Dendritic cell treated with granulocyte-macrophage colony-stimulating factor and Interleukin-4, amounts not matched to agents 40 ng/mL and 50 ng/mL, for 4 days (primary cell): ENCODE measurements at regions of chr18 and their contacts with region 1.

Region 1: DNA sequence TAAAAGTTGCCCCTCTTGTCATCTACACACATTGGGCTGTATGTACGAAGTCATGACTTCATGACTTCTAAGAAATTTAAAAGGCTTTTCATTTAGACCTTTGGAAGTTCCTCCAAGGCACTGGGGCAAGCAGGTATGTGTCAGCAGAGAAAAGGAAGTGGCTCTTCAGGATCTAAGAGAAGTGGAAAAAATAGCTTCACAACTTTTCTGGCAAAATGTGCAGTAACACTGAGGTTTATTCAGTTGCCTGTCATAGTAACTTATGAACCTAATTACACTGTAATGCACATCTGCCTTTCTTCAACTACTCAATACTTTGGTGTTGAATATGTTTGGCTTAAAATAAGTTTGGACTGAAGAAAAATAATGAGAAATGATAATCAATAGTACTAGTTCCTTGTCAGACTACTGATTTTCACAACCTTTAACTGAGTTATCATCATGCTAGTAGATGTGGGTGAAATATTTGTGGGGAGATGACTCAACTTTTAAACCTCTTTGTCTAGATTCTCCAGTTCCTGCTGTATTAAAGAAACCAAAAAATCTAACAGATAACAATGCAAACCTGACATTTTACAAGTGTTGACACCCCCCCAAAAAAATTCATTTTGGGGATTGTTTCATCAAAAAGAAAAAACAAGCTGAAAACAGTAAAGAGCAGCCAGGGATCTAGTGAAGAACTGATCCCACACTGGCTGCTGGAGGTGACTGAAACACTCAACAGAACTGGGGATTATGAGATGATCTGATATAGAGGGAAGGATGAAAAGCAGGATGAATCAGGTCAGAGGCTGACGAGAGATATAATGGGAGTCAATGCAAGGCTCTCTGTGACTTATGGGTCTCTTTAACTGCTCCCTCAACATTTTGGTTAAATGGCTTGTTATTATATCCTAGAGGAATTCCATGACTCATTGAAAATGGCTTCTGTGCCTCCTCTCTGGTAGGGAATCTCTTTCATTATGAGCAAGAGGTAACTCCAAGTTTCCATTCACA is 84.6 kb downstream of the COLEC12 start:
- H3K4me3 Mint-ChIP-seq: no peak overlapping the region
- H3K27ac Mint-ChIP-seq: peak overlapping the region; percentile 41
- H3K4me1 Mint-ChIP-seq: peaks cover 49% of the 10 kb centered on the region
- H3K27me3 Mint-ChIP-seq: no peaks in the 10 kb centered on the region

Region 2: GRCh38 chr18:275486-275885 is 140.4 kb before region 1 on chr18:
- intact Hi-C with region 1: no loop called
- H3K4me3 Mint-ChIP-seq: peak overlapping the region; percentile 2
- H3K27ac Mint-ChIP-seq: peak overlapping the region; percentile 88
- H3K4me1 Mint-ChIP-seq: peaks cover 17% of the 10 kb centered on the region
- H3K27me3 Mint-ChIP-seq: peaks cover 6% of the 10 kb centered on the region

Region 3: DNA sequence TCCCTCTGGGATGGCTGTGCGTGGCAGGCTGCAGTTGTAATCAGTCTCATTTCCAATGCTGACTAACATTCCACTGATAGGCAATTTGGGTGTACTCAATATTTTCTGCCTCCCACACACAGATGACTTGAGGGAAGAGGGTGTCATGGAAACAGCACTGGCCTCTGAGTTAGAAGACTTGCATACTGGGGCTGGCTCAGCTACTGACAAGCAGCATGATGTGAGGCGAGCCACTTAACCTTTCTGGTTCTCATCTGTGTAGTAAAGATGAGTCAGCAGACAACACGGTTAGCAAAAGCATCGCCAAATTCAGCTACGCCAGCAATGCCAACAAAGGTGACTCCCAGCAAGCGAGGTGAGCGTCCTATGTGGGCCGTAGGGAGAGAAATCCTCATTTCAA is 11.1 kb after region 1 on chr18:
- intact Hi-C with region 1: no loop called
- H3K4me3 Mint-ChIP-seq: no peak overlapping the region
- H3K27ac Mint-ChIP-seq: no peak overlapping the region
- H3K4me1 Mint-ChIP-seq: peaks cover 5% of the 10 kb centered on the region
- H3K27me3 Mint-ChIP-seq: no peaks in the 10 kb centered on the region

Region 4: DNA sequence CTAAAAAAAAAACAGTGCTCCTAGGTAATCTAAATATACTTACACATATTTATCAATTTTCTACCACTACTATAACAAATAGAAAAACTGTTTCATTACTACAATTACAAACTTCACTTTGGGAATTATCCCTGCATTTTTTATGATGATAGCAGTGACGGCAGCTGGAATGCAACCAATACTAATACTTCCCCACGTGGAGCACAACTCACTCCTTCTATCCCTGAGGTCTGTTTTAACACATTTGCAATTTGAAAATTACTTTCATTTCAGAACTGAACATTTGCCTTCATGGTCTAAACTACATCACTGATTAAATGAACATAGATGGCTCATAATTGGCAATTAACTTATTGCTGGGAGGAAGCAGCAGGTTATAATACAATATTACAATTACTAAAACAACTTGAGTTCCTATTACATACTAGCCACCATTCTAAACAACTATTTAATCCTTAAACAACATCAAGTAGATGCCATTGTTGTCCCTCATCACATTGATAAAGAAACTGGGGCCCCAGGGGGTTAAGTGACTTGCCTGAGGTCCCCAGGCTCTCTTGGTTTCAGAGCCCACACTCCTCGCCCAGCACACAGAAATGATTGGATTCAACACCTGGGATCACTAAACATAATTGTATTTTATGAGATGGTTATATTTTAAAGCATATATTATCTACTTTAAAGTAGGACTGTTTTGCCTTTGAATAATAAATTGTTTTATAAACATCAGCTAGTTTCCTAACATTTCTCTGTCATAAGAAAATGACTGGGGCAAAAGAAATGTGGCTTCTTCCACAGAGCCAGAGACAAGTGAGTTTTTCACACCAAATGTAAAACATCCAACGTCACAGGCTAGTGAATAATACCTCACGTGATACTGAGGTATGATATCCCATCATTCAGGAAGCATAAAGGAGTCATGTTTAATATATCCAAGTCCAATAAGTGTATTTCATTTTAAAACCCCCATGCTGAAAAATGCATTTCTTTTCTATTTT is 78.4 kb after region 1 on chr18:
- intact Hi-C with region 1: loop called (anchors 2 kb)
- H3K4me3 Mint-ChIP-seq: no peak overlapping the region
- H3K27ac Mint-ChIP-seq: no peak overlapping the region
- H3K4me1 Mint-ChIP-seq: peaks cover 28% of the 10 kb centered on the region
- H3K27me3 Mint-ChIP-seq: peaks cover 23% of the 10 kb centered on the region